Posterior vena cava (tissue), 2 donors: ENCODE measurements at regions of chr3 and their contacts with region 1.

Region 1: GRCh38 chr3:14461748-14462324 is 59.4 kb downstream of the SLC6A6 start:
- DNase-seq: no peak

Region 2: GRCh38 chr3:12810013-12810780 is 1651.6 kb before region 1 on chr3:
- intact Hi-C with region 1: no loop called
- DNase-seq: peak; percentile 98

Region 3: GRCh38 chr3:14124615-14125190 is 337.1 kb before region 1 on chr3 and contains the starts of genes CHCHD4 and TMEM43:
- intact Hi-C with region 1: loop called in 1 of 2 experiments (anchors 10 kb)
- DNase-seq: peak; percentile 100
- total RNA-seq, gene CHCHD4: 7.9 TPM
- total RNA-seq, gene TMEM43: 107 to 115 TPM

Region 4: GRCh38 chr3:14203521-14204079 is 258.2 kb before region 1 on chr3:
- intact Hi-C with region 1: loop called (anchors 5 kb)
- DNase-seq: no peak

Region 5: GRCh38 chr3:14261229-14261628 is 200.6 kb before region 1 on chr3:
- intact Hi-C with region 1: loop called in 1 of 2 experiments (anchors 5 kb)
- DNase-seq: peak; percentile 95

Region 6: DNA sequence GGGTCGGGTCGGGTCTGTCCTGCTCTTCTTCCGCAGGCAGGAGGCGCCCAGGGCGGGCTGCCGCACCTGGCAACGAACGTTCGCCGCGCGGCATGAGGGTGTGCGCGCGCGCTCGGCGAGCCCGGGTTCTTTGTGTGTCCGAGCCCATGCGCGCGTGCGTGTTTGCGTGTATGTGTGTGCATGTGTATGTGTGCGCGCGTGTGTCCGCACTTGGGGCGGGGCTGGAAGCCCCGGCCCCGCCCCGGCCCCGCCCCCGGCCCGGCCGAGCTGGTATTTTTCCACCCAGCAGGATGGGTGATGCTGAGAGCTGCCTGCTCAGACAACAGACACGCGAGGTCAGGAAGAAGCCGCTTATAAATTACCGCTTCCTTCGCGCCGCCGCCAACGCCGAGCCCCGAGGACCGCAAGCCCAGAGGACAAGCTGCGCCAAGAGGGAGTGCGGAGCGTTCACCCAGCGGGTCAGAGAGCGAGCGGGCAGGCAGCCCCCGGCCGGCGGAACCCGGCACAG is 59.5 kb before region 1 on chr3 and contains the start of gene SLC6A6:
- intact Hi-C with region 1: loop called in 1 of 2 experiments (anchors 5 kb)
- DNase-seq: peak; percentile 97
- total RNA-seq, gene SLC6A6: 13.3 to 23.6 TPM

Region 7: DNA sequence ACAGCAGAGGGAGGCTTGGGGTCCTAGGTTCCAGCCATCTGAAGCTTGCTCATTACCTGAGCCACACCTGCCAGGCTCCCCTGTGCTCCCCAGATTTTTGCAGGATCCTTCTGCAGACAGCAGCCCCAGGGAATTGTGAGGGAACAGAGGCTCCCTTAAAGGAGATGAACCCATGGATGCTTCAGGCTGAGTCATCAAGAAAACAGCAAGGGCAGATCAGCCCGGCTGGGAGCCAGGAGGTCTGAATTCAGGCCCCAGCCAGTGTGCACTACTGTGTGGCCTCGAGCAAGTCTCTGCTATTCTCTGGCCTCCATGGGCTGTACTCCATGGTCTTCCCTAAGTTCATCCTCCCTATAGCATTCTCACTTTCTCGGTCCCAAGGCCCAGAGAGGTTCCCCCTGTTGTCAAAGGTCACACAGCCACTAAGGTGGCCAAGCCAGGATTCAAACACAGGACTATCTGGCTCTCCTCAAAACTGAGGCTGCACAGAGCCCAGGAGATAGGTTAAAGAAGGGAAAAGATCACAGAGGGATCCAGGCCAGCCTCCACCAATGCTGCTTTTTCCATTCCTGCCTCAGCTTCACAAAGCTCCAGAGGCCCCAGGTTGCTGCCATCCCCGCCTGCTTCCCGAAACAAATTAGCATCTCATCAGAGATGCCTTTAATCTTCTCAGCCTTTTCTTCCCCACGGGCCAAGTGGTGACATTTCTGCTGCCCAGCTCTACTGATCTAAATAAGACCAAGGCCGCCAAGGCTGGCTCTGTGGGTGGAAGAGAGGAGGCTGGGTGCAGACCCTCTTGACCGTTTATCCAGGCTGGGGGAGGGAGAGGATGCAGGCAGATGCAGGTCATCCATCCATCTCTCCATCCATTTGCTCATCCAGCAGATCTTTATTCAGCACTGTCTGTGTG is 99.5 kb after region 1 on chr3:
- intact Hi-C with region 1: no loop called
- DNase-seq: no peak

Region 8: DNA sequence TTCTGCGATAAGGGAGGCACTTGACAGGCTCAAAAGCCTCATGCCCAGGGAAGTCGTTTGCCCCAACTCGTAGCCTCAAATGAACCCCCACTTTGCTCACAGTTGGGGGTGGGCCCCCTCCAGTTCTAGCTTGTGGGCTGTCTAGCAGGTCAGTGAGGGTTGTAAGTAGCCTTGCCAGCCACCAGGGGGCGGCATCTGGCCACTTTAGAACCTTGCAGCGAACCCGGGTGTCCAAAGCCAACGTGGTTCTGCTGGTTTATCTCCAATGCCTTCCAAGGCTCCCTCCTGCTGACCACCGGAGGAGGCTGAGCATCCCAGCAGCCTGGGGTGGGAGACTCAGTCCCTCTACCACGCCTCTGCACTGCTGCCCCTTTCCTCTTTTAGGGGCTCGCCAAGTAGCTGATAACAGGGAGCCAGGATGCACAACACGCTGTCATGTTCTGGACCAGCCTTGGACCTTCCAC is 646.3 kb after region 1 on chr3:
- intact Hi-C with region 1: no loop called
- DNase-seq: peak; percentile 93